Gastrocnemius medialis (tissue), 4 donors: ENCODE measurements at regions of chr6 and their contacts with region 1.

Region 1: GRCh38 chr6:75368151-75368779 is 83.7 kb upstream of the TMEM30A start:
- DNase-seq: peak; percentile 51 to 77
- ATAC-seq: peak; percentile 86 to 92
- H3K4me3 ChIP-seq: no peak overlapping the region
- H3K27ac ChIP-seq: peak overlapping the region; percentile 68 to 84 (median 76)
- H3K4me1 ChIP-seq: peaks cover 46 to 49% of the 10 kb centered on the region in 2 donors
- H3K27me3 ChIP-seq: no peaks in the 10 kb centered on the region
- CTCF ChIP-seq: peak; percentile 60 to 71 (median 64)
- POLR2A ChIP-seq: no peak

Region 2: DNA sequence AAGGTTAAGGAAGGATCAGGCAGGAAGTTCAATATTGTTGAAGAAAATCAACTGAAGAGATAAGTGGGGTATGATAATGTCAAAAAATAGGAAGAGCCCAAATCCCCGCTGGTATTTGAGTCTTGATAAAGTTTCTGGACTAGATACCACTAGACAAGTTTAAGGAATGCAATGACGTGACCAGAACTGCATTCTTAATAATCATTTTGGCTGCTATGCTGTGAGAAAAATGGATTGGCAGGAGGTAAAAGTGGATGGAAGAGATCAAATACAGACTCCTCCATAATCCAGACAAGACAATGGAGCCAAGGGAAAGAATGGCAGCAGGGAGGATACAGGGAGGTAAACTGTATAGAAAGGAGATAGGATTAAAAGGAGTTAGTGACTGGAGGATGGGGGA is 290.6 kb before region 1 on chr6:
- in situ Hi-C with region 1: no loop called
- intact Hi-C with region 1: no loop called
- DNase-seq: no peak
- ATAC-seq: no peak
- H3K4me3 ChIP-seq: no peak overlapping the region
- H3K27ac ChIP-seq: no peak overlapping the region
- H3K4me1 ChIP-seq: no peaks in the 10 kb centered on the region
- H3K27me3 ChIP-seq: no peaks in the 10 kb centered on the region
- CTCF ChIP-seq: no peak
- POLR2A ChIP-seq: no peak

Region 3: DNA sequence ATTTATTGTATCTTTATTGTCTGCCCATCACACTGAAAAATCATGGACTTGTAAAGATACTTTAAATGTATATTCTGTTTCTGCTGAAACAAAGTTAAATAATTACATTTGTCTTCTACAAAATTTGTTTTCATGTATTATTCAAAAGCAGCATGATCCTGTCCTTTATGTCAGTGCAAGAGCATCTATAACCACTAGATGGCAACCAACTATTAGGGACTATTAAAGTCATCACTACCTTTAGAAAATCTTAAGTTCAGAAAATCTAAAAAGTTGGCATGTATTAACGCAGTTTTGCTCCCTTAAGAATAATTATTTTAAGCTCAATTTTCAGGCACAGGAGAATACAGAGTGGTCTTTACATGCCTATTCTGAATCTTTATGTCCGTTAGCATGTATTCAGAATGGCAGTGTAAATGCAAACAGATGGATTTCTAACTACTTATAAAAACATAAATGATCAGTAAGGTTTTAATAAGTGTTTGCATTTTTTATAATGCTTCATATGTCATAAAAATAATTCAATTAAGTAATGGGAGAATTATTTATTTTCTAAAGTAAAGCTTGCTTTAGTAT is 101.5 kb before region 1 on chr6:
- in situ Hi-C with region 1: loop called in 1 of 4 experiments (anchors 5 kb)
- intact Hi-C with region 1: no loop called
- DNase-seq: no peak
- ATAC-seq: peak; percentile 67 to 75
- H3K4me3 ChIP-seq: no peak overlapping the region
- H3K27ac ChIP-seq: no peak overlapping the region
- H3K4me1 ChIP-seq: peaks cover 15 to 18% of the 10 kb centered on the region in 2 donors
- H3K27me3 ChIP-seq: no peaks in the 10 kb centered on the region
- CTCF ChIP-seq: peak; percentile 62 to 93 (median 84)
- POLR2A ChIP-seq: no peak

Region 4: DNA sequence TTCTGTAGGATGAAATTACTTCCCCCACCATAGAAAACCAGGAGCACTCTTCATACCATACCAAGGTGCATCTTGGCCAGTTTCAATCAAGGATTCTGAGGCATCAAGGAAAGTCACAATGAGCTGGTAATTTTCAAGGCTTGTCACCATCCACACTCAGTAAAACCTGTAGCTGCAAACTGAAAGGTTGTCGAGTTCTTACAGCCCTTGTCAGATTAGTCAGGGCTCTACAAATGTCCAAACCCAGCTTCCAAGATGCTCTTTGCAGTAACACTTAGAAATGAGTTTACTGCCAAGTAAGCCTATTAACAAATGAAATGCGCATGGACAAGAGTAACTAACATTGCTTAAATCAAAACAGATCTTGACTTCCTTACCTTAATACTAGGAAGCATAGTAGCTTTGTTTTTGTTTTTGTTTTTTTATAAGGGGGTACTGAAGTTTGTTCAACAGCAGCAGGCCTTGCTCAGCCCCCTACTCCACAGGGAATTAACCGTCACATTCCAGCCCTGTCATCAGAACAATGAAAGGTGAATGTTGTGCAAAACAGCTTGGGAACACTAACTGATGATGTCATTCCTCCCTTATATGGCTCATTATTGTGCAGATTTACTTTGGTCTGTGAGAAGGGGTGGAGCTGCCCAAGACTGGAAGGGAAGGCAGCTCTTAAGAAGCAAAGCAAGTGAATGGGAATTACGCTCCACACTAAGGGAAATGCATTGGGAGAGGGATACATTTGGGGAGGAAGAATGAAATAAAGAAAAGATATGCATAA is 33.8 kb before region 1 on chr6:
- in situ Hi-C with region 1: no loop called
- intact Hi-C with region 1: no loop called
- DNase-seq: no peak
- ATAC-seq: peak; percentile 64 to 87
- H3K4me3 ChIP-seq: no peak overlapping the region
- H3K27ac ChIP-seq: peak overlapping the region; percentile 34 to 66 (median 52)
- H3K4me1 ChIP-seq: peaks cover 41 to 42% of the 10 kb centered on the region in 2 donors
- H3K27me3 ChIP-seq: no peaks in the 10 kb centered on the region
- CTCF ChIP-seq: no peak
- POLR2A ChIP-seq: no peak

Region 5: DNA sequence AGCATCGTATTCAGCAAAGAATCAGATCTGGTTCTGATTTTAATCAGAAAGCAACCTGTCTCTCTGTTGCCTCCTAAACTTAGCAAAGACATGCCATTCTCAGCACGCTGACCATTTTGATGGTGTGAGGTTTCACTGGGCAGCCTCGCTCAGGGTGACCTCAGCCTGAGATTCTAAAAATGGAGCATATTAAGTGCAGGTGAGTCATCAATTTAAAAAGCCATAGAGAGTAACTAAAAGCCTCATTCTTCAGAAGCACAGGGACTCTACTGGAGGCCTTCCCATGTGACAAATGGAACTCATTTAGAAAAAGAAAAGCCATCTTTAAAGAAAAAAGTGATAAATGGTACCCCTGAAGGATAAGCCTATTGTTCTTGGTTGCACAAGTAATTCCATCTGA is 34.0 kb after region 1 on chr6:
- in situ Hi-C with region 1: no loop called
- intact Hi-C with region 1: loop called (anchors 1 kb)
- DNase-seq: peak; percentile 69 to 83
- ATAC-seq: peak; percentile 95 to 97
- H3K4me3 ChIP-seq: peak overlapping the region in 1 of 4 donors; percentile 6
- H3K27ac ChIP-seq: peak overlapping the region; percentile 71 to 78 (median 75)
- H3K4me1 ChIP-seq: peaks cover 73 to 76% of the 10 kb centered on the region in 2 donors
- H3K27me3 ChIP-seq: no peaks in the 10 kb centered on the region
- CTCF ChIP-seq: no peak
- POLR2A ChIP-seq: no peak

Region 6: DNA sequence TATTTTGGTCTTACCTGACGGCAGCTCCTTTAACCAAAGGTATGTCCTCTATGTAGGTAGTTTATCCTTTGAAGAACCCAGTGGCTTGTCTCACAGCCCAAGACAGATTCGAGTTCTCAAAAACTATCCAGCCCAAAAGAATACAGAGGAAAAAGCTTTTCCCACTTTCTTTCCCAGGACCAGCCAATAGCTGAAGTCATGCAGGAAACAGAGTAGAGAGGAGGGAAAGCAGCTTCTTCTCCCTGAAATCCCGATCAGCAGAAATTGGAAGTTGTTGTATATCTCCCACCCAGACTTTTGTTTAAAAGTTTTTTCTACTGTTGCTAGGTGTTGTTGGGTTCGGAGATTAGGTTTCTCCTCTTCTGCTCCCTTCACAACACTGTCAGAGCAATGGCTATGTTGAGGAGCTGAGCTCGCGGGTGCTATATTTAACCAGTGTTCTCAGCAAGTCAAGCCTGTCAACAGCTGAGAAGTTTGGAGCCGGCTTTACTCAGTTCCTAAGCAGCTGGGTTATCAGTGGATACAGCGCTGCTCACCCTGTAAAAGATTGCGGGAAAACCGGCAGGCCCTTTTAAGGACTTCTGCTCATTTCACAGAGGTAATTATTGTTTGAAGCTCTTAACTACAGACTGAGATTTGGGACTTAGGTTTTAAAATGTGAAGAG is 125.3 kb after region 1 on chr6 and contains the start of gene FILIP1:
- in situ Hi-C with region 1: loop called in 2 of 4 experiments (anchors 5 to 10 kb)
- intact Hi-C with region 1: loop called (anchors 2 kb)
- DNase-seq: peak; percentile 91 to 92
- ATAC-seq: peak; percentile 91 to 92
- H3K4me3 ChIP-seq: peak within 1 kb of the TSS; percentile 68 to 82 (median 76)
- H3K27ac ChIP-seq: peak within 1 kb of the TSS; percentile 93 to 98 (median 98)
- H3K4me1 ChIP-seq: peaks cover 50 to 55% of the 10 kb centered on the region in 2 donors
- H3K27me3 ChIP-seq: no peaks in the 10 kb centered on the region
- CTCF ChIP-seq: no peak
- POLR2A ChIP-seq: peak; percentile 88 to 98
- total RNA-seq, gene FILIP1: 57.5 to 123 (median 93.8) TPM

Region 7: GRCh38 chr6:75504465-75505228 is 136.4 kb after region 1 on chr6:
- in situ Hi-C with region 1: loop called (anchors 5 to 10 kb)
- intact Hi-C with region 1: loop called (anchors 1 kb)
- DNase-seq: peak; percentile 24 to 45
- ATAC-seq: peak; percentile 93 to 99
- H3K4me3 ChIP-seq: no peak overlapping the region
- H3K27ac ChIP-seq: no peak overlapping the region
- H3K4me1 ChIP-seq: peaks cover 0 to under 1% of the 10 kb centered on the region in 2 donors
- H3K27me3 ChIP-seq: no peaks in the 10 kb centered on the region
- CTCF ChIP-seq: peak; percentile 55 to 87 (median 69)
- POLR2A ChIP-seq: no peak